Naive thymus-derived CD4-positive, alpha-beta T cell (primary cell): ENCODE measurements at regions of chr13 and their contacts with region 1.

Region 1: DNA sequence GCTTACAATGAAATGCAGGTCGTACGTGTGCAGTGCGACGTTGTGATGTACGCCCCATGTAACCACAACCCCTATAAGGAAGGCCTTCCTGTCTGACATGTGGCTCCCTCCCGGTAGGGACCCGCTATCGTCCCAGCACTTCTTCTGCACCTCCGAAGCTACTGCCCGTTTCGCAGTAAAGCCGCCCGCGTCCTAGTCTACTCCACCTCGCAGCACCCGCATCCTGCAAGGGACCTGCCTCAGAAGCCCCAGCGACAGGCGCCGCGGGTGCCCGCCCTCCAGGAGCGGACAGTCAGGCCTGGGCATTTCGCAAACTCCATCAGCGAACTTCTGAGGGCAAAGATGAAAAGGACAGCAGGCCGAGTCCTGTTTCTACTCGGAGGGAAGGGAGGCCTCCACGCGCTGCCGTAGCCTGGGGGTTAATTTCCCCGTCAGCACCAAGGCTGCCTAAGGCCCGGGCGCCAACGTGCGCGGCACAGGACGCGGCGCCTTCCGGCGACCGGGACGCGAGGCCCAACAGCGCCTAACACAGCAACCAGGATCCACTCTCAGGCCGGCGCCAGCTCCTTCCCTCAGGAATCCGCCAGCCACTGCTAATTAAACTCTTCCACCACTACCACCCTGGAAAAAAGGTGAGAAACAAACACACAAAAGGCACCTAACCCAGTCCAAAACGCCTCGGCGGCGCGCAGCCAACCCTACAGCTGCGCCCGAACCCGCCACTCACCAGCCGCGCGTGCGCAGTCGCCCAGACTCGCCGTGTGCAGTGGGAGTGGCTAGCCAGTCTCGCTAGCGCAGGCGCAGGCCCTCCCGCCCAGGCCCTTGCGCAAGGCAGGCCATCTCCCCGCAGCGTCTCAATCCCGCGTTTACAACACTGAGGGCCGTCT is at the start of gene EEF1AKMT1:
- DNase-seq: peak; percentile 88 to 98 (median 94)
- ATAC-seq: peak; percentile 93
- H3K4me3 ChIP-seq: peak within 1 kb of the TSS; percentile 90
- H3K4me3 Mint-ChIP-seq: peak within 1 kb of the TSS; percentile 85 to 99 (median 94)
- H3K27ac ChIP-seq: peak within 1 kb of the TSS; percentile 93
- H3K27ac Mint-ChIP-seq: peak within 1 kb of the TSS; percentile 94 to 100 (median 99)
- H3K4me1 ChIP-seq: peaks cover 9 to 16% of the 10 kb centered on the region in 2 donors
- H3K4me1 Mint-ChIP-seq: peaks cover 19 to 60% (median 53%) of the 10 kb centered on the region in 7 donors
- H3K27me3 ChIP-seq: no peaks in the 10 kb centered on the region
- H3K27me3 Mint-ChIP-seq: no peaks in the 10 kb centered on the region
- total RNA-seq, gene EEF1AKMT1: 4.2 to 11.2 (median 8.5) TPM

Region 2: DNA sequence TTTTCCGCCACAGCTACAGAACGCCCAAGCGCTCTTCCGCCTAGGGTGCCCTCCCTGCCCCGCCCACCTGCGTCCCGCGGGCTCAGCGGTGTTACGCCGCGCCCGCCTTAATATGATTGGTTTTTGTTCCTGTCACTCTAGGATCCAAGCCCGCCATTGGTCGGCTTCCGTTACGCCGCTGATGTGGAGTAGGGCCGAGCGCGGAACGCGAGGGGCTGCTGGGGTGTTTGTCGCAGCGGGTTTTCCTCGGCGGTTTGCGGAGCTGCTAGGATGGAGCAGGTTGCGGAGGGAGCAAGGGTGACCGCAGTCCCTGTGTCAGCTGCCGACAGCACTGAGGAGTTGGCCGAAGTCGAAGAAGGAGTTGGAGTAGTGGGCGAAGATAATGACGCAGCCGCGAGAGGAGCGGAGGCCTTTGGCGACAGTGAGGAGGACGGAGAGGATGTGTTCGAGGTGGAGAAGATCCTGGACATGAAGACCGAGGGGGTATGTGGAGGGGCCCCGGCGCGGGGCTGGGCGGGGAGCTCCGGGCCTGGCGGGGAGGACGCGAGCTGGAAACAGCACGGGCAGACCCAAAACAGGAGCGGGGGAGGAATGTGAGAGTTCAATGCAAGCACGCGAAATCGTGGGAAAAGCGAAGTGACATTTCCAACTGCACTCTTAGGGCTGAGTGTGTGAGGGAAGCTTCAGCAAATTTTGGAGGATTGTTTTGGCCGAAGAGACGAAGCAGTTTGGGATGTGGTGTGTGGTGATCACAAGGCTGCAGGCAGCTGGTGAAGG is 1139.8 kb before region 1 on chr13 and contains the start of gene MPHOSPH8:
- CTCF ChIA-PET with region 1: no interaction called
- POLR2A ChIA-PET with region 1: interaction called, 3 read pairs
- intact Hi-C with region 1: loop called (anchors 2 to 5 kb)
- DNase-seq: peak; percentile 82 to 94 (median 92)
- ATAC-seq: peak; percentile 99
- H3K4me3 ChIP-seq: peak within 1 kb of the TSS; percentile 83
- H3K4me3 Mint-ChIP-seq: peak within 1 kb of the TSS; percentile 96 to 100 (median 100)
- H3K27ac ChIP-seq: peak within 1 kb of the TSS; percentile 91
- H3K27ac Mint-ChIP-seq: peak within 1 kb of the TSS; percentile 98 to 100 (median 99)
- H3K4me1 ChIP-seq: peaks cover 20 to 28% of the 10 kb centered on the region in 2 donors
- H3K4me1 Mint-ChIP-seq: peaks cover 29 to 42% (median 34%) of the 10 kb centered on the region in 7 donors
- H3K27me3 ChIP-seq: no peaks in the 10 kb centered on the region
- H3K27me3 Mint-ChIP-seq: peaks cover 0 to 3% (median 0%) of the 10 kb centered on the region in 5 donors
- total RNA-seq, gene MPHOSPH8: 50.6 to 131 (median 65.6) TPM

Region 3: DNA sequence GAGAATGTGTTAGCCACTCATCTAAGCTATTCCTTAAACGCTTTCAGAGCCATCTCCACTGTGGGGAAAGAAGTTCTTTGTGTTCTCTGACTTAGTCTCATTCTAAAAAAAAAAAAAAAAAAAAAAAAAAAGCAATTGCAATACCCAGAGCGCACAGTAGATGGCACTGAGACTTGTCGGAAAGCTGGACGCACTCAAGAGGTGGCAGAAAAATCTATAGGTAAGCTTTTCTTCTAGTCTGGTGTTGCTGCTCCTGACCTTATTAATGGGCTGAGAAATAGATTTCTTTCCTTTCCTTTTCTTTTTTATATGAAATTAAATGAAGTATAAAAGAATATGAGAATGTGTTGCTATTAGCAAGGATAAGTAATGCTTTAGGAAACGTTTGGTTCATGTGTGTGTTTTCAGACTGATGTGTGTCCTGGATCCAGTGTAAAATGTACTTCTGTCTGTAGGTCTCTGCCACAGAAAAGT is 576.0 kb before region 1 on chr13:
- CTCF ChIA-PET with region 1: no interaction called
- POLR2A ChIA-PET with region 1: interaction called, 3 read pairs
- intact Hi-C with region 1: loop called (anchors 1 to 5 kb)
- DNase-seq: peak in 5 of 9 donors; percentile 38 to 59 (median 51)
- ATAC-seq: peak; percentile 81
- H3K4me3 ChIP-seq: no peak overlapping the region
- H3K4me3 Mint-ChIP-seq: no peak overlapping the region
- H3K27ac ChIP-seq: no peak overlapping the region
- H3K27ac Mint-ChIP-seq: peak overlapping the region in 1 of 9 donors; percentile 57
- H3K4me1 ChIP-seq: peaks cover 11 to 20% of the 10 kb centered on the region in 2 donors
- H3K4me1 Mint-ChIP-seq: peaks cover 15 to 26% (median 19%) of the 10 kb centered on the region in 7 donors
- H3K27me3 ChIP-seq: peaks cover 27 to 41% of the 10 kb centered on the region in 2 donors
- H3K27me3 Mint-ChIP-seq: peaks cover 30 to 64% (median 48%) of the 10 kb centered on the region in 5 donors

Region 4: GRCh38 chr13:20703780-20704445 is 69.5 kb before region 1 on chr13:
- CTCF ChIA-PET with region 1: interaction called, 3 read pairs
- POLR2A ChIA-PET with region 1: interaction called, 3 read pairs
- intact Hi-C with region 1: loop called (anchors 1 kb)
- DNase-seq: peak; percentile 70 to 84 (median 80)
- ATAC-seq: peak; percentile 93
- H3K4me3 ChIP-seq: no peak overlapping the region
- H3K4me3 Mint-ChIP-seq: peak overlapping the region in 4 of 10 donors; percentile 59 to 97 (median 72)
- H3K27ac ChIP-seq: no peak overlapping the region
- H3K27ac Mint-ChIP-seq: peak overlapping the region in 1 of 9 donors; percentile 56
- H3K4me1 ChIP-seq: peaks cover 3 to 8% of the 10 kb centered on the region in 2 donors
- H3K4me1 Mint-ChIP-seq: peaks cover 0 to 13% (median 8%) of the 10 kb centered on the region in 7 donors
- H3K27me3 ChIP-seq: peaks cover 0 to 5% of the 10 kb centered on the region in 2 donors
- H3K27me3 Mint-ChIP-seq: peaks cover 13 to 48% (median 17%) of the 10 kb centered on the region in 5 donors

Region 5: GRCh38 chr13:20828539-20829364 is 55.3 kb after region 1 on chr13:
- CTCF ChIA-PET with region 1: no interaction called
- POLR2A ChIA-PET with region 1: interaction called, 3 read pairs
- intact Hi-C with region 1: loop called (anchors 2 kb)
- DNase-seq: peak in 7 of 9 donors; percentile 46 to 75 (median 67)
- ATAC-seq: peak; percentile 93
- H3K4me3 ChIP-seq: no peak overlapping the region
- H3K4me3 Mint-ChIP-seq: peak overlapping the region in 8 of 10 donors; percentile 51 to 81 (median 73)
- H3K27ac ChIP-seq: peak overlapping the region; percentile 14
- H3K27ac Mint-ChIP-seq: peak overlapping the region; percentile 35 to 87 (median 77)
- H3K4me1 ChIP-seq: no peaks in the 10 kb centered on the region
- H3K4me1 Mint-ChIP-seq: peaks cover 7 to 15% (median 10%) of the 10 kb centered on the region in 7 donors
- H3K27me3 ChIP-seq: no peaks in the 10 kb centered on the region
- H3K27me3 Mint-ChIP-seq: no peaks in the 10 kb centered on the region

Region 6: DNA sequence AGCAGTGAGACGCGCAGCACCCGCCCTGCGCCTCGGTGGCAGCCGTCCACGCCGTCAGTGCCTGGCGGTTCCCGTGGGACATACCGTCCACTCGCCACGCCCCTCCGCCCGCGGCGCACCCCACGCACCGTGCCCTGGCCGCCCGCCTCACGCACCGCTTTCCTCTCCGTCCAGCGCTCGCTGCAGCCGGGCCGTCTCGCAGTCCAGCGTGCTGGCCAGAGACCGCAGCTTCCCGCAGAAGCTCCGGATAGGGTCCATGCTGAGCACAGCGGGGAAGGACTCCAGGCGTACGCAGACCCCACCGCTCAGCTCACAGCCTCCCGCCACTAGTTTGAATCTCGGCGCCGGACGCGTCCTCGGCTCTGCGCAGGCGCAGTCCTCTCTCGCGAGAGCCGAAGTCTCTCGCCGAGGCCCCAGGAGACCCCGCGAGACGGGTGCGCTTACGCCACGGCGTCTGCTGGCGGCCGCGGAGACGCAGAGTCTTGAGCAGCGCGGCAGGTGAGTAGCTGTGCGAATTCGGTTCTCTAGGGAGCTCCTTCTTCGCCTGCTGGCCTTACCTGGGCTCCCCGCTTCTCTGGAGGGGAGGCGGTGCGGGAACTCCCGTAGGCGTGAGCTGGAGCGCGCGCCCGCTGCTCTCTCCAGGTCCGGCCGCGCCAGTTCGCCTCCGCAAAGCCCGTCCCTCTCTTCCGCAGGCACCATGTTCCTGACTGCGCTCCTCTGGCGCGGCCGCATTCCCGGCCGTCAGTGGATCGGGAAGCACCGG is 403.0 kb after region 1 on chr13 and contains the starts of genes MRPL57 and SKA3:
- CTCF ChIA-PET with region 1: no interaction called
- POLR2A ChIA-PET with region 1: interaction called, 3 read pairs
- intact Hi-C with region 1: loop called (anchors 1 to 2 kb)
- DNase-seq: peak; percentile 90 to 97 (median 94)
- ATAC-seq: peak; percentile 97
- H3K4me3 ChIP-seq: peak within 1 kb of the TSS; percentile 86
- H3K4me3 Mint-ChIP-seq: peak within 1 kb of the TSS; percentile 95 to 99 (median 97)
- H3K27ac ChIP-seq: peak within 1 kb of the TSS; percentile 95
- H3K27ac Mint-ChIP-seq: peak within 1 kb of the TSS; percentile 80 to 97 (median 95)
- H3K4me1 ChIP-seq: peaks cover 10 to 16% of the 10 kb centered on the region in 2 donors
- H3K4me1 Mint-ChIP-seq: peaks cover 13 to 31% (median 22%) of the 10 kb centered on the region in 7 donors
- H3K27me3 ChIP-seq: no peaks in the 10 kb centered on the region
- H3K27me3 Mint-ChIP-seq: no peaks in the 10 kb centered on the region
- total RNA-seq, gene MRPL57: 10.6 to 22.8 (median 19.8) TPM
- total RNA-seq, gene SKA3: 0.46 to 35.0 (median 1.6) TPM in 4 of 5 experiments, not detected in the other

Region 7: DNA sequence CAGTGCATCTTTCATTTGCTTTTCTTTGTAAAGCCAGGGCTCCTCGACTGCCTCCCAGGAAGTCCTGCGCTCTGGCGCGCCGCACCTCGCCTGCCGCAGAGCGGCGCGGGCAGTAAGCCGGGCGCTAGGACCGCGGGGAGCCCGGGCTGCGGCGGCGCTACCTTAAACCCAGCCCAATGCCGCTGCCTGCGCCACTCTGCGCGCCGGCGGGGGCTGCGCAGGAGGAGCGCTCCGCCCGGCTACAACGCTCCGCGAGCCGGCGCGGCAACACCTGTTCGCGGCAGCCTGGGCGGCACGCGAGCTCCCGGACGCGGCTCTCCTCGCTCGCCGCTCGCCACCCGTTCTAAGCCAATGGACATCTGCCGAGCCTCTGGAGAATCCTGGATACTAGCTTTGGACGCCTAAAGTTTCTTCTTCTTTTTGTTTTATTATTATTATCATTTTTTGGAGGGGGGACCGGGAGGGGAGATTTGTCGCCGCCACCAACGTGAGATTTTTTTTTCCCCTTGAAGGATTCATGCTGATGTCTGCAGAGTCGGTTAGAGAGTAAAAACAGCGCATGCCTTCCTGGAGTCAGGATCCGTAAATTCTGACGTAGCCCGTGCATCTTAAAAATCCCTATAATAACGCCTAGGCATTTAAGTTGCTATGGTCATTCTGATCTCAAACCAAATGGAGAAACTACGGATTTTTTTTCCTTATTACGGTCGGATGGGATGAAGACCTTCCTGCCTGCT is 897.6 kb after region 1 on chr13 and contains the start of gene FGF9:
- CTCF ChIA-PET with region 1: no interaction called
- POLR2A ChIA-PET with region 1: interaction called, 3 read pairs
- intact Hi-C with region 1: loop called in 1 of 2 experiments (anchors 5 kb)
- DNase-seq: peak; percentile 76 to 88 (median 86)
- ATAC-seq: peak; percentile 89
- H3K4me3 ChIP-seq: peak within 1 kb of the TSS; percentile 92
- H3K4me3 Mint-ChIP-seq: peak within 1 kb of the TSS; percentile 88 to 98 (median 93)
- H3K27ac ChIP-seq: peak within 1 kb of the TSS; percentile 48
- H3K27ac Mint-ChIP-seq: peak within 1 kb of the TSS; percentile 61 to 94 (median 78)
- H3K4me1 ChIP-seq: peaks cover 19 to 32% of the 10 kb centered on the region in 2 donors
- H3K4me1 Mint-ChIP-seq: peaks cover 27 to 45% (median 44%) of the 10 kb centered on the region in 7 donors
- H3K27me3 ChIP-seq: peaks cover 0 to 4% of the 10 kb centered on the region in 2 donors
- H3K27me3 Mint-ChIP-seq: peaks cover 5 to 77% (median 20%) of the 10 kb centered on the region in 5 donors
- total RNA-seq, gene FGF9: 0.19 to 5.6 (median 2.0) TPM